ENCODE measurements at regions of chr3 and their contacts with region 1.

Region 1: DNA sequence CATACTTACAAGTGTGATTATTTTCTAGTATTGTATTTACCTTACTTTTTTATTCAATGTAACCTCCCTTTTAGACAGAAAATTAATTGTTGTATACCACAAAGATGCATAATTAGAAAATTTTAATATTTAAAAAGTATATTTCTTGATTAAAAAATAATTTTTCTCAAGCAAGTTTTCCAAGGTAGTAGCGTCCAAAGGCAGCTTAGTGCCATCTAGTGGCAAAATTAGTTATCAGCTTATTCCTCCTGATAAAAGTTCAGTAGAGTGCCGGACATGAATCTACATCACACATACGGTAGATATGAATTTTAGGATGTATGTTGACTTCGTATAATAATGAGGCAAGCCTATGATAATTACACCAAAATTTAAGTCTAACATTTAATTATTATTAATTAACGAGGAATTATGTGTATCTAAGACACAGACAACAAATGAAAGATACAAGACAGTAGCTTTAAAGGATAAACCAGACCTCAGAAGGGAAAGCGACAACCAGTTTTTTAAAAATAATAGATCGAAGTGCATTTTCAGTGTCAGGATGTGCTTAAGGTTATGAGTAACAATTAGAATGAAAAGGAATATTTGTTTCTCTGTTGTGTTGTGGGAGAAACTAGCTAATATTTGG is 405.9 kb downstream of the ROBO1 start:
- DNase-seq: peak; percentile 48
- H3K4me3 ChIP-seq: no peak overlapping the region
- H3K27ac ChIP-seq: no peak overlapping the region
- H3K4me1 ChIP-seq: peaks cover 4% of the 10 kb centered on the region
- H3K27me3 ChIP-seq: no peaks in the 10 kb centered on the region
- CTCF ChIP-seq: peak; percentile 55 to 57
- POLR2A ChIP-seq: no peak

Region 2: DNA sequence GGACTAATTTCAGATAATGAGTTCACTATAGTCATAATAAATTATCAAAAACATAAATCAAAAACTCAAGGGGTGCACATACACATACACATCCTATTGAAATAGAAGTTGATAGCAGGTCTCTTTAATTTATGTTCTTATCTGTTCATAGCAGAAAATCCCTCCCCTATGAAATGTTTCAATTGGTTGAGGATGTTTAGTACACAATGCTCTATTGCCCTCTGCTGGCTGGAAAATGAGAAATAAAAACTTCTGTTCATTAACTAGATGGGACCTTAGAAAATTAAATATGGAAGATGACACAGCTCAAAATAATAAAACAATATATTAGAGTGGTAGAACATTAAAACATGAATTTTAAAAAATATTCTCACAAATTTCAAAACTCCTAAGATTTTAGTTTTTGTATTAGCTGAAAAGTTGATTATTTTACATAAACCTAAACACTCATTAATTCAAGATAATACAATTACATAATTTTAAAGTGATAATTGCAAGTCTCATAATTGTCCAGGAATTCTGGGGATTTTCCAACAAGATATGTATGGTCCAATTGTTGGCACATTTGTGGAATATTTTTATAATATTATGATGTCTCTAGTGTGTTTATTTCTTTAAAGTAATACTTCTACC is 329.1 kb before region 1 on chr3:
- CTCF ChIA-PET with region 1: interaction called, 10 read pairs
- POLR2A ChIA-PET with region 1: no interaction called
- dilution Hi-C with region 1: no loop called
- intact Hi-C with region 1: no loop called
- DNase-seq: peak; percentile 62
- H3K4me3 ChIP-seq: no peak overlapping the region
- H3K27ac ChIP-seq: no peak overlapping the region
- H3K4me1 ChIP-seq: peaks cover 2% of the 10 kb centered on the region
- H3K27me3 ChIP-seq: no peaks in the 10 kb centered on the region
- CTCF ChIP-seq: peak; percentile 31 to 32
- POLR2A ChIP-seq: no peak

Region 3: DNA sequence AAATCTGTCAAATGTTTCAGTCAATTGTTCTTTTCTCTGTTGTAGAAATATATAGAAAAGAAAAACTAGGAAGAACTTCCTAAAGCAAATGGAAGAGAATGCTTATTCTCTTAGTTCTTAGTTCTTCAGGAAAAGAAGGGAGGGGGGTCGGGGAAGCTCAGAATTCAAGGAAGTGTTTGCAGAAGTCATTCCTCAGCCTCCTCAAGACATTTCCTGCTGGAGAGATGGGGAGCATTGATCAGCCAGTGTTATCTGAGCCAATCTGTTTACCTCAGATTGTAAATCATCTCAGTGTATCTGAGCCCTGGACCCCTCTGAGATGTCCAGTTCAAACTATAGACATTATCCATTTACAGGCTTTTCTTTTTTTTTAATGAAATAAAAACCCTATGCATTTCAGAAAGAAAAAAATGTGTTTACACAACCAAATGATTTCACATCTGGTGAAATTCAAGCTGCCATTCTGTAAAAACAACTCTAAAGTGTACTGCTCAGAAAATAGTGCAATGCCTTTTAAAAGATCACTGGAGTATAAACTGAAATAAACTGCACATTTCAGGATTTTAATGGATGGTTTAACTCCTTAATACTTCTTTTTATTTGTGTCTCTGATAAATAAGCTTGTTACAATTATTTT is 54.8 kb before region 1 on chr3:
- CTCF ChIA-PET with region 1: interaction called, 14 read pairs
- POLR2A ChIA-PET with region 1: no interaction called
- dilution Hi-C with region 1: no loop called
- intact Hi-C with region 1: no loop called
- DNase-seq: no peak
- H3K4me3 ChIP-seq: no peak overlapping the region
- H3K27ac ChIP-seq: no peak overlapping the region
- H3K4me1 ChIP-seq: no peaks in the 10 kb centered on the region
- H3K27me3 ChIP-seq: no peaks in the 10 kb centered on the region
- CTCF ChIP-seq: no peak
- POLR2A ChIP-seq: no peak

Region 4: GRCh38 chr3:79351699-79352098 is 10.2 kb before region 1 on chr3:
- CTCF ChIA-PET with region 1: interaction called, 31 read pairs
- POLR2A ChIA-PET with region 1: no interaction called
- dilution Hi-C with region 1: no loop called
- intact Hi-C with region 1: no loop called
- DNase-seq: no peak
- H3K4me3 ChIP-seq: no peak overlapping the region
- H3K27ac ChIP-seq: no peak overlapping the region
- H3K4me1 ChIP-seq: no peaks in the 10 kb centered on the region
- H3K27me3 ChIP-seq: no peaks in the 10 kb centered on the region
- CTCF ChIP-seq: no peak
- POLR2A ChIP-seq: no peak

Region 5: DNA sequence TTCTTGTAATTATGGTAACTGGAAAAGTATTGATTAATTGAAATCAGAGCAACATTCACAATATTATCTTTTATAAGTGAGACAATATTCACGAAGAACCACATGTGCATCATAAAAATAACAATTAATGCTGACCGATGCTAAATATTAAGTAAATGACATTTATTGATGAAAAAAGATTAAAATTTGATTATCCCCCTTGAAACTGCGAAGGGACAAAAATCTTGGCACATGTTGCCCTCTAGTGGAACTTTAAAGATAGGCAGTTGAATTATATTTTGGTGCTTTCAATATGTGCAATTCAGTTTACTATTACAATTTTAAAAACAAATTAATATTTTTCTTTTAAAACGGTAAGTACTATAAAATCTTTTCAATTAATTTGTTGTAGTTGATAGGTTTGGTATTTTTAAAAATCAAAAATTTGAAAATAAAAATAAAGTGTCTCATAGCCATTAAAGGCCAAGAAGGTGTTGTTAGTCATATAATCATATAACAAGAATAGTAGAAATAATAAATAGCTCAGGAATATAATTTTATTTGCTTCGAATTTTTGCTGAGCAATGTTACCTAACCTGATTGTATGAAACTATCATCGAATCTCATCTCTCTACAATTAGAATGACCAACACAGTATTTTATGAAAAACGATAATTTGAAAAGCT is 135.7 kb after region 1 on chr3:
- CTCF ChIA-PET with region 1: interaction called, 5 read pairs
- POLR2A ChIA-PET with region 1: no interaction called
- dilution Hi-C with region 1: no loop called
- intact Hi-C with region 1: loop called (anchors 5 kb)
- DNase-seq: peak; percentile 33
- H3K4me3 ChIP-seq: no peak overlapping the region
- H3K27ac ChIP-seq: no peak overlapping the region
- H3K4me1 ChIP-seq: no peaks in the 10 kb centered on the region
- H3K27me3 ChIP-seq: no peaks in the 10 kb centered on the region
- CTCF ChIP-seq: peak; percentile 25 to 35
- POLR2A ChIP-seq: no peak